Breast epithelium (tissue), 4 donors: ENCODE measurements at regions of chr6 and their contacts with region 1.

Region 1: GRCh38 chr6:123053602-123054225 is 57.7 kb downstream of the CLVS2 start:
- DNase-seq: no peak
- H3K4me3 ChIP-seq: no peak overlapping the region
- H3K27ac ChIP-seq: no peak overlapping the region
- H3K4me1 ChIP-seq: no peaks in the 10 kb centered on the region
- H3K27me3 ChIP-seq: no peaks in the 10 kb centered on the region
- CTCF ChIP-seq: no peak
- POLR2A ChIP-seq: no peak

Region 2: DNA sequence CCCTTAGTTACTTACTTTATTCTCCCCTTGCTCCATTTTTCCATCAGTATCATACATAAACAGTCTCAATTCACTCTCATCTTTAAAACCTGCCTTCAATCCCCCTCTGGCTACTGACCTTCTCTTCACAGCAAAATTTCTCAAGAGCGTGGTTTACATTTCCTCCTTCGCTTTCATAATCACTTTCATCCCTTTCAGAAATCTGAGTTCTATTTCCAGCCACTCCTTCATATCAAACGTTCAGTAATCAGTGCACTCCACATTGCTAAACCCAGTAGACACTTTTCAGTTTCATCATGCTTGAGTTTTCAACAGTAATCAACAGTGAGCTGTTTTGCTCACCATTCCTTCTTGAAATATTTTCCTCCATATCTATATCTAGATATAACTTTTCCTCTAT is 831.0 kb before region 1 on chr6:
- intact Hi-C with region 1: no loop called
- DNase-seq: no peak
- H3K4me3 ChIP-seq: no peak overlapping the region
- H3K27ac ChIP-seq: no peak overlapping the region
- H3K4me1 ChIP-seq: no peaks in the 10 kb centered on the region
- H3K27me3 ChIP-seq: no peaks in the 10 kb centered on the region
- CTCF ChIP-seq: no peak
- POLR2A ChIP-seq: no peak

Region 3: GRCh38 chr6:123042401-123042800 is 11.3 kb before region 1 on chr6:
- intact Hi-C with region 1: loop called (anchors 1 kb)
- DNase-seq: no peak
- H3K4me3 ChIP-seq: no peak overlapping the region
- H3K27ac ChIP-seq: no peak overlapping the region
- H3K4me1 ChIP-seq: no peaks in the 10 kb centered on the region
- H3K27me3 ChIP-seq: no peaks in the 10 kb centered on the region
- CTCF ChIP-seq: no peak
- POLR2A ChIP-seq: no peak

Region 4: DNA sequence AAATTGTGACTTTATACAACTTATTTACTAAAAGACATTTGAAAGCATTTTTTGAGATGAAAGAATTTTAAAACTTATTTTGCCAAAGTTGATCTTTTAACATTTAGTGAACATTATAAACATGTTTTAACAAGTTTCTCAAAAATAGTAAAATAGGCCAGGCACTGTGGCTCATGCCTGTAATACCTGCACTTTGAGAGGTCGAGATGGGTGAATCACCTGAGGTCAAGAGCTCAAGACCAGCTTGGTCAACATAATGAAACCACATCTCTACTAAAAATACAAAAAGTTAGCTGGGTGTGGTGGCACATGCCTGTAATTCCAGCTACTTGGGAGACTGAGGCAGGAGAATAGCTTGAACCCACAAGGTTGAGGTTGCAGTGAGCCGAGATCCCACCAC is 20.9 kb after region 1 on chr6:
- intact Hi-C with region 1: no loop called
- DNase-seq: no peak
- H3K4me3 ChIP-seq: no peak overlapping the region
- H3K27ac ChIP-seq: no peak overlapping the region
- H3K4me1 ChIP-seq: no peaks in the 10 kb centered on the region
- H3K27me3 ChIP-seq: no peaks in the 10 kb centered on the region
- CTCF ChIP-seq: no peak
- POLR2A ChIP-seq: no peak